Tibial artery (tissue), 4 donors: ENCODE measurements at regions of chr6 and their contacts with region 1.

Region 1: GRCh38 chr6:130969791-130970491 is 93.1 kb downstream of the EPB41L2 start:
- DNase-seq: peak; percentile 46 to 71
- H3K4me3 ChIP-seq: peak overlapping the region; percentile 52 to 55
- H3K27ac ChIP-seq: peak overlapping the region; percentile 64 to 65
- H3K4me1 ChIP-seq: peaks cover 0 to 50% (median 23%) of the 10 kb centered on the region in 4 donors
- H3K27me3 ChIP-seq: no peaks in the 10 kb centered on the region
- CTCF ChIP-seq: no peak

Region 2: DNA sequence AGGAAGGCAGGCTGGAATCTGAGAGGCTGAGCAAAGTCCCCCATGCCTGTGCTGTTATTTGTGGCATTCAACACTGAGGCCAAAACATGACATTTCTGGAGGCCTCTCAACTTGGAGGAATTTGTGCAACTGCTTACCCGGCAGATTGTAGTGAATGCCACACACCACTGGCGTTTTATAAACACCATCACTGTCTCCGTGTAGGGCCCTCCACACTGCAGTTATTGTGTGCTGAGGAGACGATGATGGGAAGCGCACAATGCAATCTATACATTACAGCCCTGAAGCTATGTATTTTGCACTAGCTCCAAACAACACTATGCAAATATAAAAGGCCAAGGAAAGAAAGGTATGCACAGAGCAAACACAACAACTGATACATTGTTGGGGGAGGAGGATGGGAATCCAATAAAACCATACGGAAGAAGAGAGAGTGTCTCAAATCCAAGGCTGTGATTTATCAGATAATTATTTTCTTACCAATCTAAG is 36.2 kb before region 1 on chr6:
- intact Hi-C with region 1: no loop called
- DNase-seq: peak; percentile 51 to 66
- H3K4me3 ChIP-seq: no peak overlapping the region
- H3K27ac ChIP-seq: peak overlapping the region in 1 of 2 donors; percentile 22
- H3K4me1 ChIP-seq: peaks cover 0 to 56% (median 22%) of the 10 kb centered on the region in 4 donors
- H3K27me3 ChIP-seq: no peaks in the 10 kb centered on the region
- CTCF ChIP-seq: no peak

Region 3: DNA sequence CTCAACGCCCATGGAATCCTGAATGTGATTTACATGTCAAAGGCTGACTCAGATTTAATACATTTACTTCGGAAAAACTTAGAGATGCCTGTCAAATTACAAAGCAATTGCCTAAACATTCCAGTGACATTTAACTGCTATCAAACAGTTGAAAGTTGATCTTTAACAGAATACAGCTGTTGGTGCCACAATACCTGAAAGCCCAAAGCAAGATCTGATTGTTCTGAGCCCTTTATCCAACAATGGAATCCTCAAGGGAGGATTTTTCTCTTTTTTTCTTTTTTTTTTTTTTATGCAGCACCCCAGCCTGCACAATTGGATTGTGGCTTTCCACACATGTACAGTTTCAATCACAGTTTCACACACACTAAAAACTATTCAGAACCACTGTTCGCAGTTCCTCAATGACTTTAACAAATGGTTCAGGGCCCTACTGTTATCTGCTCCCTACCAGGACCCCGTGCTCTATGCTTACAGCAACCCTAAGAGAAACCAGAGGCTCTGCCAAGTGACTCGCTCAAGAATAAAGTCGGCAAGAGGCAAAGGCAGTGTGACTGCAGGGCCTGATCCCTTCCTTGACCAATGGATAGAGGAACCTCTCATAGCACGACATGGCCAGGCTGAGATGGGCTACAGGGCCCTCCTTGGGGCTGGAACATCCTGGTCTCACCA is 59.8 kb after region 1 on chr6:
- intact Hi-C with region 1: loop called (anchors 10 kb)
- DNase-seq: no peak
- H3K4me3 ChIP-seq: no peak overlapping the region
- H3K27ac ChIP-seq: no peak overlapping the region
- H3K4me1 ChIP-seq: peaks cover 0 to 4% (median 0%) of the 10 kb centered on the region in 4 donors
- H3K27me3 ChIP-seq: no peaks in the 10 kb centered on the region
- CTCF ChIP-seq: no peak

Region 4: GRCh38 chr6:131061041-131061750 is 91.3 kb after region 1 on chr6:
- intact Hi-C with region 1: loop called (anchors 2 kb)
- DNase-seq: no peak
- H3K4me3 ChIP-seq: peak overlapping the region; percentile 74 to 96
- H3K27ac ChIP-seq: peak overlapping the region; percentile 78 to 85
- H3K4me1 ChIP-seq: peaks cover 0 to 31% (median 6%) of the 10 kb centered on the region in 4 donors
- H3K27me3 ChIP-seq: no peaks in the 10 kb centered on the region
- CTCF ChIP-seq: no peak

Region 5: GRCh38 chr6:132011582-132011981 is 1041.6 kb after region 1 on chr6:
- intact Hi-C with region 1: no loop called
- DNase-seq: peak in 1 of 2 donors; percentile 43
- H3K4me3 ChIP-seq: no peak overlapping the region
- H3K27ac ChIP-seq: peak overlapping the region; percentile 52 to 54
- H3K4me1 ChIP-seq: peaks cover 0 to 35% (median 12%) of the 10 kb centered on the region in 4 donors
- H3K27me3 ChIP-seq: no peaks in the 10 kb centered on the region
- CTCF ChIP-seq: no peak